ENCODE measurements at regions of chr13 and their contacts with region 1.

Region 1: GRCh38 chr13:23621316-23621645 is 51.1 kb downstream of the TNFRSF19 start:
- DNase-seq: peak; percentile 53
- H3K4me3 Mint-ChIP-seq: no peak overlapping the region
- H3K27ac Mint-ChIP-seq: no peak overlapping the region
- H3K4me1 Mint-ChIP-seq: peaks cover 18% of the 10 kb centered on the region
- H3K27me3 Mint-ChIP-seq: no peaks in the 10 kb centered on the region
- CTCF ChIP-seq: no peak

Region 2: GRCh38 chr13:23609414-23609760 is 11.9 kb before region 1 on chr13:
- CTCF ChIA-PET with region 1: no interaction called
- POLR2A ChIA-PET with region 1: no interaction called
- intact Hi-C with region 1: no loop called
- DNase-seq: no peak
- H3K4me3 Mint-ChIP-seq: no peak overlapping the region
- H3K27ac Mint-ChIP-seq: no peak overlapping the region
- H3K4me1 Mint-ChIP-seq: no peaks in the 10 kb centered on the region
- H3K27me3 Mint-ChIP-seq: peaks cover 49% of the 10 kb centered on the region
- CTCF ChIP-seq: no peak

Region 3: GRCh38 chr13:23771552-23771951 is 150.3 kb after region 1 on chr13:
- CTCF ChIA-PET with region 1: no interaction called
- POLR2A ChIA-PET with region 1: no interaction called
- intact Hi-C with region 1: loop called (anchors 5 kb)
- DNase-seq: no peak
- H3K4me3 Mint-ChIP-seq: no peak overlapping the region
- H3K27ac Mint-ChIP-seq: peak overlapping the region; percentile 5
- H3K4me1 Mint-ChIP-seq: peaks cover 17% of the 10 kb centered on the region
- H3K27me3 Mint-ChIP-seq: no peaks in the 10 kb centered on the region
- CTCF ChIP-seq: no peak

Region 4: GRCh38 chr13:23790577-23791170 is 169.4 kb after region 1 on chr13:
- CTCF ChIA-PET with region 1: no interaction called
- POLR2A ChIA-PET with region 1: no interaction called
- intact Hi-C with region 1: no loop called
- DNase-seq: no peak
- H3K4me3 Mint-ChIP-seq: no peak overlapping the region
- H3K27ac Mint-ChIP-seq: no peak overlapping the region
- H3K4me1 Mint-ChIP-seq: no peaks in the 10 kb centered on the region
- H3K27me3 Mint-ChIP-seq: no peaks in the 10 kb centered on the region
- CTCF ChIP-seq: no peak

Measured in MCF 10A (cell line).